IMR-90 (cell line): ENCODE measurements at regions of chr6 and their contacts with region 1.

Region 1: GRCh38 chr6:83597051-83597450 is 84.7 kb downstream of the PRSS35 start:
- DNase-seq: no peak
- ATAC-seq: no peak
- H3K4me3 ChIP-seq: no peak overlapping the region
- H3K27ac ChIP-seq: no peak overlapping the region
- H3K4me1 ChIP-seq: 0 out of 2 replicates have a peak, but pooled peaks cover 1% of the 10 kb centered on the region
- H3K27me3 ChIP-seq: no peaks in the 10 kb centered on the region
- CTCF ChIP-seq: no peak
- POLR2A ChIP-seq: no peak
- RAD21 ChIP-seq: no peak

Region 2: GRCh38 chr6:84213217-84213616 is 616.2 kb after region 1 on chr6:
- CTCF ChIA-PET with region 1: interaction called, 3 read pairs
- POLR2A ChIA-PET with region 1: interaction called, 13 read pairs
- dilution Hi-C with region 1: no loop called
- in situ Hi-C with region 1: loop called (anchors 25 kb)
- intact Hi-C with region 1: no loop called
- DNase-seq: no peak
- ATAC-seq: no peak
- H3K4me3 ChIP-seq: no peak overlapping the region
- H3K27ac ChIP-seq: no peak overlapping the region
- H3K4me1 ChIP-seq: no peaks in the 10 kb centered on the region
- H3K27me3 ChIP-seq: no peaks in the 10 kb centered on the region
- CTCF ChIP-seq: no peak
- POLR2A ChIP-seq: no peak
- RAD21 ChIP-seq: no peak

Region 3: DNA sequence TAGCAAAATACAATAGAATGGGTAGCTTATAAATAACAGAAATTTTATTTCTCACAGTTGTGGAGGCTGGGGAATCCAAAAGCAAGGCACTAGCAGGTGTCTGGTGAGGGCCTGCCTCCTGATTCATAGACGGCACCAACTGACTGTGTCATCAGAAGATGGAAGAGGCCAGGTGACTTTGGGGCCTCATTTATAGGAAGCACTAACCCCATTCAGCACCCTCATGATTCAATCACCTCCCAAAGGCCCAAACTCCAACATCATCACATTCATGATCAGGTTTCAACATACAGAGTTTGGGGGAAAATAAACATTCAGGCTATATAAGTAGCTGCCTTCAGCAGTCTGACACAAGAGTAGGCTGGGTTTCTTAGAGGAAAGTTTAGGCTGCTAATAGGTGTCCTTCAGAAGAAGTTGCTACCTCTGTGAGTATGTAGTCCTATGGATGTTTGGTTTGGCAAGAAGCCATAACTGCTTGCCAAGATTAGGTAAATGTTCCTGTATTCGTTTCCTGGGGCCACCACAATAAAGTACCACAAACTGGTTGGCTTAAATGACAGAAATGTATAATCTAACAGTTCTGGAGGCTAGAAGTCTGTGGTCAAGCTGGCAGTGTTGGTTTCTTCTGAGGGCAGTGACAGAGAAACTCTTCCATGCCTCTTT is 1901.7 kb after region 1 on chr6:
- CTCF ChIA-PET with region 1: no interaction called
- POLR2A ChIA-PET with region 1: no interaction called
- dilution Hi-C with region 1: no loop called
- in situ Hi-C with region 1: no loop called
- intact Hi-C with region 1: no loop called
- DNase-seq: peak; percentile 46
- ATAC-seq: peak; percentile 64
- H3K4me3 ChIP-seq: no peak overlapping the region
- H3K27ac ChIP-seq: no peak overlapping the region
- H3K4me1 ChIP-seq: peaks cover 4% of the 10 kb centered on the region
- H3K27me3 ChIP-seq: no peaks in the 10 kb centered on the region
- CTCF ChIP-seq: no peak
- POLR2A ChIP-seq: no peak
- RAD21 ChIP-seq: no peak